Caco-2 (cell line): ENCODE measurements at regions of chr14 and their contacts with region 1.

Region 1: DNA sequence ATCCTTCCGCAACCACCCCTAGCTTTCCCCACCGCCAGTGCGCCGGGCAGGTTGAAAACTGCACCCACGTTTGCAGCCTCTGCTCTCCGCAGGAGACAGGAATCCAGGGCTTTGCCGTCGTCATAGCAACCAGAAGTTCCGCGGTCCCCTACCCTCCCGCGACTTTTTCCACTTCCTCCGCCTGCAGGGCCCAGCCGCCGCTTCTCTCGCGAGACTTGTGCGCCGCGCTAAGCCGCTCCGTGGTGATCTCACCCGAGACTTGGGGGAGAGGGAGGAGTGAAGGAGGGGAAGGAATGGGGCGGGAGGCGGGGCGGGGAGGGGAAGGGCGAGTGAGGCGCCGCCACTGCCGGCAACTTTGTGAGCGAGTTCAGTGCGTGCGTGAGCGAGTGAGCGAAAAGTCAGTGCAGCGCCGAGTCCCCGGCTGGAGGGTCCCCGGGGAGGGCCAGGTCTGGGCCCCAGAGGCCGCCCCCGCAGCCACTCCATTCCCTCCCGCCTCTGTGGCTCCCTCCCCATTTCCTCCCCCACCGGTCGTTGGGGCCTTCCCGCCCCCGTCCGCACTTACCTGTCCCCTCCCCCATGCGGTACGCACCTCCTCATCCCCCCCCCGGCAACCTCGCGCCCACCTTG is 413.0 kb downstream of the PCNX1 start:
- DNase-seq: peak; percentile 98 to 99
- H3K4me3 ChIP-seq: peak within 1 kb of the TSS; percentile 94
- H3K4me3 Mint-ChIP-seq: peak within 1 kb of the TSS; percentile 80
- H3K27ac Mint-ChIP-seq: peak within 1 kb of the TSS; percentile 90
- H3K4me1 ChIP-seq: peaks cover 13% of the 10 kb centered on the region; the same call in 1 of the 2 replicates
- H3K4me1 Mint-ChIP-seq: peaks cover 15% of the 10 kb centered on the region
- H3K27me3 ChIP-seq: no peaks in the 10 kb centered on the region
- H3K27me3 Mint-ChIP-seq: no peaks in the 10 kb centered on the region
- CTCF ChIP-seq: no peak

Region 2: DNA sequence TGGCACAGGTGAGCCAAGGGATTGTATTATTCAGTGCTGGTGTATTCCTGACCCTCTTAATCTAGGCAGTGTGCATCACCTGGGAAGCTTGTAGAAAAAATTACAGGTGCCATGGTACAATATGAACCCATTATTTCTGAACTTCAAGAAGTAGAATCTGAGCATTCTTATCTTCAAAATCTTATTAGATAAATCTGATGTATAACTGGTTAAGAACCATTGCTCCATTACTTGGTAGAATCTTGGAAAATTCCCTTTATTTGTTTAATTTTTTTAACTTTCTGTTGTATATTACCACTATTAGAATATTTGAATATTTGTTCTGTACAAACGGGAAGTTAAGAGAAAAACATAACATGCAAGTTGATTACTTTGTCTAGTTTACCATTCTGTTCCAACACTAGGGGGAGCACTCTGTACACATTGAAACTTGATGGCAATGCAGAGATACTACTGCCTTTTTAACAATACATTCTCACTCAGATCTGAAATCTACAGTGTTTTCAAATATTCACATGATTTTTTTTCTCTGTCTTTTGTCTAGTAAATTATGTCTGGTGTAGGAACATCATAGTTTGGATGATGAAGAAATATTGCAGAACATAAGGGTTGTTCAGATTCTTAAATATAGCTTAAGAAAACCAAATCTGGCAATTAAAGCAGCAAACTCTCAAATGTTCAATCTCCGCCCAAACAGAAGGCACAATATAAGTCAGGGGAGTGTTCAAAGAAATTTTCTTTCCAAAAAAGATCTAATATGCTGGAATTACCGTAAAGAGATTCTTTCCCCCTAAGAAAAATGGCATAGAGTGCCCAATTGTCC is 216.3 kb before region 1 on chr14:
- CTCF ChIA-PET with region 1: no interaction called
- POLR2A ChIA-PET with region 1: no interaction called
- intact Hi-C with region 1: loop called (anchors 5 kb)
- DNase-seq: peak in 1 of 2 experiments; percentile 61
- H3K4me3 ChIP-seq: no peak overlapping the region
- H3K4me3 Mint-ChIP-seq: no peak overlapping the region
- H3K27ac Mint-ChIP-seq: no peak overlapping the region
- H3K4me1 ChIP-seq: peaks cover 17% of the 10 kb centered on the region; the same call in 1 of the 2 replicates
- H3K4me1 Mint-ChIP-seq: peaks cover 13% of the 10 kb centered on the region
- H3K27me3 ChIP-seq: no peaks in the 10 kb centered on the region
- H3K27me3 Mint-ChIP-seq: no peaks in the 10 kb centered on the region
- CTCF ChIP-seq: peak; percentile 81 to 82

Region 3: DNA sequence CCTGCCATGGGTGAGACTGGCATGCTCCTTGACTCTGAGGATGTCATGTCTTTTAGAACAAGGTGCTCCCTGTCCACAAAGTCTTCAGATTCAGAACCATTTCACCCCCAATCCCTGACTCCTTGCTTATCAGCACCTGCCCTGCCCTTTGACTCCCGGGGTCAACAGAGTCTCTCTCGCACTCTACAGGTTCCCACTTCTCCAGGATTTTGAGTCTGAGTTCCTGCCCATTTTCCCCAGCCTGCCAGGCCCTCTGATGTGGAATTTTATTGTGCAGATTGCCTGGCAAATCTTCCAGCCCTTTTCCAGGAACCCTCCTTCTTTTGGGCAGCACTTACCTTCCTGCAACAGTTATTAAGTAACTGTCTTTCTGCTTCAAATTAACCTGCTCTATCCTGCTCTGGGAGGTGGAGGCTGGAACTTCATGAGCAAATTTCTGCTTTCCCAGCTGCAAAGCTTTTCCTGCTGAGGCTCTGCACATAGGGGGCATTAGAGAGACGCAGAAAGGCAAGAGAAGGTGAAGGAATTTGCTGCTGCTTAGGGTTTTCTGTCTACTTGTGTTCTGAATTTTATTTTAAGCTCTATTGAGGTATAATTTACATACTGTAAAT is 153.9 kb before region 1 on chr14:
- CTCF ChIA-PET with region 1: interaction called, 8 read pairs
- POLR2A ChIA-PET with region 1: interaction called, 7 read pairs
- intact Hi-C with region 1: loop called (anchors 1 kb)
- DNase-seq: peak; percentile 67 to 69
- H3K4me3 ChIP-seq: no peak overlapping the region
- H3K4me3 Mint-ChIP-seq: peak overlapping the region; percentile 60
- H3K27ac Mint-ChIP-seq: peak overlapping the region; percentile 72
- H3K4me1 ChIP-seq: peaks cover 38% of the 10 kb centered on the region
- H3K4me1 Mint-ChIP-seq: peaks cover 35% of the 10 kb centered on the region
- H3K27me3 ChIP-seq: no peaks in the 10 kb centered on the region
- H3K27me3 Mint-ChIP-seq: no peaks in the 10 kb centered on the region
- CTCF ChIP-seq: peak; percentile 36 to 64

Region 4: GRCh38 chr14:71339650-71340415 is 19.6 kb after region 1 on chr14:
- CTCF ChIA-PET with region 1: no interaction called
- POLR2A ChIA-PET with region 1: interaction called, 5 read pairs
- intact Hi-C with region 1: loop called (anchors 1 kb)
- DNase-seq: peak in 1 of 2 experiments; percentile 29
- H3K4me3 ChIP-seq: no peak overlapping the region
- H3K4me3 Mint-ChIP-seq: peak overlapping the region; percentile 32
- H3K27ac Mint-ChIP-seq: peak overlapping the region; percentile 5
- H3K4me1 ChIP-seq: peaks cover 67% of the 10 kb centered on the region
- H3K4me1 Mint-ChIP-seq: peaks cover 54% of the 10 kb centered on the region
- H3K27me3 ChIP-seq: no peaks in the 10 kb centered on the region
- H3K27me3 Mint-ChIP-seq: no peaks in the 10 kb centered on the region
- CTCF ChIP-seq: no peak

Region 5: GRCh38 chr14:71403656-71404055 is 83.4 kb after region 1 on chr14:
- CTCF ChIA-PET with region 1: interaction called, 15 read pairs
- POLR2A ChIA-PET with region 1: interaction called, 8 read pairs
- intact Hi-C with region 1: loop called (anchors 1 kb)
- DNase-seq: peak; percentile 39 to 47
- H3K4me3 ChIP-seq: no peak overlapping the region
- H3K4me3 Mint-ChIP-seq: no peak overlapping the region
- H3K27ac Mint-ChIP-seq: no peak overlapping the region
- H3K4me1 ChIP-seq: peaks cover 11% of the 10 kb centered on the region; the same call in 1 of the 2 replicates
- H3K4me1 Mint-ChIP-seq: peaks cover 10% of the 10 kb centered on the region
- H3K27me3 ChIP-seq: no peaks in the 10 kb centered on the region
- H3K27me3 Mint-ChIP-seq: no peaks in the 10 kb centered on the region
- CTCF ChIP-seq: peak; percentile 23 to 46

Region 6: DNA sequence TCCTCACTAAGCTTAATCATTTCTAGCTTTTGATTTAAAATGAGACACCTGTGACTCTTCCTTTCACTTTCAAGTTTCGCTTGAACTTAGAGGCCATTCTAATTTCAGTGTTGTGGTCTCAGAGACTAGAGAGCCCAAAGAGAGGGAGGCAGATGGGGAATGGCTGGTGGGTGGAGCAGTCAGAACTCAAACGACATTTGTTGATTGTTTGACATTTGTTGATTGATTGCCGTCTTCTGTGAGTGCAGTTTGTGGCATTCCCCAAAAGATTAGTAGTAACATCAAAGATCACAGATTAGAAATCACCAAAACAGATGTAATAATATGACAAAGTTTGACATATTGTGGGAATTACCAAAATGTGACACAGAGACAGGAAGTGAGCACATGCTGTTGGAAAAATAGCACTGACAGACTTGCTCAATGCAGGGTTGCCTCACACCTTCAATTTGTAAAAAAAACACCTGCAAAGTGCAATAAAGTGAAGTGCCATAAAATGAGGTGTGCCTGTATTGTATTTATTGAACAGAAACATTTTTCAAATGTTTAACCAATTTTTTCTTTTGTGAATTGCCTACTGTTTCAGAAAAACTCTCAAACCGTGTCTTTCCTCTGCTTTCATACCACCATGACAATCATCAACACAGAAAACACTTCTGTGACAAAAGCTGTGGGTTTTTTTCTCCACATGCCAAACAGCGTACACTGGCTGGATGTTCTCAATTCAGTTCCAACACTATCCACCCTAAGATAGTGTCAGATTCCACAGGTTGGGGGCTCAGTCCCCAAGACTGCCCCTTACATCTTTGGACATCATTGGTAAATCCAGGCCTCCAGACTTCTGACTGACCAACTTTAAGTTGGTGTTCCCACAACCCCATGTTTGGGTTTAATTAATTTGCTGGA is 235.7 kb after region 1 on chr14:
- CTCF ChIA-PET with region 1: interaction called, 4 read pairs
- POLR2A ChIA-PET with region 1: no interaction called
- intact Hi-C with region 1: loop called (anchors 5 kb)
- DNase-seq: peak; percentile 69 to 72
- H3K4me3 ChIP-seq: no peak overlapping the region
- H3K4me3 Mint-ChIP-seq: peak overlapping the region; percentile 68
- H3K27ac Mint-ChIP-seq: peak overlapping the region; percentile 91
- H3K4me1 ChIP-seq: peaks cover 57% of the 10 kb centered on the region
- H3K4me1 Mint-ChIP-seq: peaks cover 35% of the 10 kb centered on the region
- H3K27me3 ChIP-seq: no peaks in the 10 kb centered on the region
- H3K27me3 Mint-ChIP-seq: no peaks in the 10 kb centered on the region
- CTCF ChIP-seq: no peak